ENCODE measurements at regions of chr2 and their contacts with region 1.

Region 1: DNA sequence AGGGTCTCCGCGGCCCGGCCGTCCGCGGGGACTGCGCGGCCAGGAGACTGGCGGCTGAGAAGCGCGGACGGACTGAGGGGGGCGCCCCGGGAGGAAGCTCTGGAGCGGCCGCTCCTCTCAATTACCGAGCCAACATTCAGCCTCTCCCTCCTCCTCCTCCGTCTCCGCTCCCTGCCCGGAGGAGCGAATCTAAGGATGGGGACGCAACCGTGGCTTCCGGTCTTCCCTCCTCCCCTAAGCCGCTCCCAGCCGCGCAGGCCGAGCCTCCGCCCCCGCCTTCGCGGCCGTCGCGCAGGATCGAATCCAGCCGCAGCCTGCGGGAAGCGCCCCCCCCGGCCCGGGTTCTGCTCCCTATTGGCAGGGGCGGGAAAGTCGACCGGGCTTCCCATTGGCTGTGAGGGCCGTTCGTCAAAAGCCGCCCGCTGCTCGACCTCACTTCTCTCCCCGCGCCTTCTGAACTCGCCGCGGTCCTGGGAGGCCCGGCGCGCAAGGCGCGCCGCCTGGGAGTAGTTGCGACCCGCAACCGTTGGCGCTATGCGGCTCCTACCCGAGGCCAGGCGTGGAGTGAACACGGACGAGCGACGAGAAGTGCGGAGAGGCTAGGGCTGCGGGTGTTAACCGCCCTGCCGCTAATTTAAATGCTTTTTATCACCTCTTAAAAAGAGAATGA is at the start of gene HNRNPLL:
- DNase-seq: peak; percentile 97
- ATAC-seq: peak; percentile 82
- H3K4me3 Mint-ChIP-seq: peak within 1 kb of the TSS; percentile 99
- H3K27ac Mint-ChIP-seq: peak within 1 kb of the TSS; percentile 95
- H3K4me1 Mint-ChIP-seq: peaks cover 49% of the 10 kb centered on the region
- H3K27me3 Mint-ChIP-seq: no peaks in the 10 kb centered on the region
- total RNA-seq, gene HNRNPLL: 88.8 to 106 TPM

Region 2: DNA sequence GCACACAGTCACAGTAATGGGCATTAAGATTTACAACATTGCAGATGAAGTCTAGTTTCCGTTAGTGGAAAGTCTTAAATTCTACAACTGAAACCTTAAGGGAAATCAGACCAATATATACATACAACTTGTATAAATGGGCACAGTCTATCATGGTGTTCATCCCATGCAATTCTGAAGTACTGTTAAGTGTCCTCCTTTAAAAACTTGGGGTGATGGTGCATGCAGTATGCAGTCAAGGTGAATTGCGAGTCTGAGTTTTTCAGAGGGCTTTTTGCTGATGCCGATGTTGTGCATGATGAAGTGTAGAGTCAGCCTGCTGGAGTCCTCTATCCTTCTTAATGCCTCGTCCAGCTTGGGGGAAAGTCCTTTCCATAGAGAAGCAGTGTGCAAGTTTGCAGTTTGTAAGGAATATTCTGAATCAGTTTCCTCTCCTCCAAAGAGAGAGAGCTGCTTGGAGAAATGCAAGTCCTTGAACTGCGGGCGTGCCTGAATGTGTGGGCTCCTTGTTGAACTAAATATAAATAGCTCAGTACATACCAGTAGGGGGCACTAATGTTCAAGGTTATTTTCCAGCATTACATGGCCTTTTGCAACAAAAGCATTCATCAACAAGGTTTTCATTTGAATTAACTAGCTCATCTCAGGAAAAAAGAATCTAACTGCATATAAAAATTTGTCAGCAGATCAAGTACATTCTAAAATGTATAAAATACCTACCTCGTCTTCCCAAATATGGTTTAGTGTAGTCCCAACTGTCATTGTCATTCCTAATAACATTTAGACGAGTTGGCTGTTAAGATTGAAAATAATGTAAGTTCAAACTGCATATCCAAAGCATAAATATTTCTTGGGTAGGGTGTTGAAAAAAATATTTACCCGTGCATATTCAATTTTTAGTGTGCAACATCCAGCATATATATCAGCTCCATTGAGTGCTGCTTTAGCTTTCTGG is 21.4 kb before region 1 on chr2:
- CTCF ChIA-PET with region 1: interaction called, 72 read pairs
- DNase-seq: no peak
- ATAC-seq: peak; percentile 86
- H3K4me3 Mint-ChIP-seq: no peak overlapping the region
- H3K27ac Mint-ChIP-seq: peak overlapping the region; percentile 9
- H3K4me1 Mint-ChIP-seq: peaks cover 31% of the 10 kb centered on the region
- H3K27me3 Mint-ChIP-seq: no peaks in the 10 kb centered on the region

Region 3: DNA sequence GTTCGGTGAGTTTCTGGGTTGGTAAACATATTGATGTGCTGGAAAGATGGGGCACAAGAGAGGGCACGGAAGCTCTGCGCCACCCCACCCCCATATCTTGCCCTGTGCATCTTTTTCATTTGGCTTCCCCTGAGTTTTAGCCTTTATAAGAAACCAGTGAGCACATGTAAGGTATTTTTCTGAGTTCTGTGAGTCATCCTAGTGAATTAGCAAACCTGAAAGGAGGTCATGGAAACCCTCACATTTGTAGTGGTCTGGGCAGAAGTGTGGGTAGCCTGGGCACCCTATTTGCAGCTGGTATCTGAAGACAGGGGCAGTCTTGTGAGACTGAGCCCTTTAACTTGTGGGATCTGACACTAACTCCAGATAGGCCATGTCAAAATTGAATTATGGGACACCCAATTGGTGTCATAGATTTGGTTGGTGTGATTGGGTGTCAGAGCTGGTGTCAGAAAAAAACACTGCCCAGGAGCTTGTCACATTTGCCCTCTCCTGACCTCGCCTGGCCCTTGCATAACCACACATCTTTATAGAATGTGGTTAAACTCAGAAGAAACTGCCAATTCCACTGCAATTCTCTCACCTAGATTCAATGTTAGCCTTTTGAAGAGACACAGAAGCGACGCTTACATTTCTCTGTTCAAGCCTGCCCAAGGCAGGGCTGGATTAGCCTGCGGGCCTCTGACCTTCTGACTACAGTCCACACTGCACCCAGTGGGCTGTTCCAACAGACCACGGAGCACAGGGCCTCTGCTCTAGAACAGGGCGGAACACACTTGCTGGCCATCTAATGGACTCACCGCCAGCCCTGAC is 51.1 kb after region 1 on chr2:
- CTCF ChIA-PET with region 1: interaction called, 166 read pairs
- DNase-seq: peak; percentile 77
- ATAC-seq: peak; percentile 71
- H3K4me3 Mint-ChIP-seq: peak overlapping the region; percentile 55
- H3K27ac Mint-ChIP-seq: peak overlapping the region; percentile 94
- H3K4me1 Mint-ChIP-seq: peaks cover 69% of the 10 kb centered on the region
- H3K27me3 Mint-ChIP-seq: no peaks in the 10 kb centered on the region

Region 4: DNA sequence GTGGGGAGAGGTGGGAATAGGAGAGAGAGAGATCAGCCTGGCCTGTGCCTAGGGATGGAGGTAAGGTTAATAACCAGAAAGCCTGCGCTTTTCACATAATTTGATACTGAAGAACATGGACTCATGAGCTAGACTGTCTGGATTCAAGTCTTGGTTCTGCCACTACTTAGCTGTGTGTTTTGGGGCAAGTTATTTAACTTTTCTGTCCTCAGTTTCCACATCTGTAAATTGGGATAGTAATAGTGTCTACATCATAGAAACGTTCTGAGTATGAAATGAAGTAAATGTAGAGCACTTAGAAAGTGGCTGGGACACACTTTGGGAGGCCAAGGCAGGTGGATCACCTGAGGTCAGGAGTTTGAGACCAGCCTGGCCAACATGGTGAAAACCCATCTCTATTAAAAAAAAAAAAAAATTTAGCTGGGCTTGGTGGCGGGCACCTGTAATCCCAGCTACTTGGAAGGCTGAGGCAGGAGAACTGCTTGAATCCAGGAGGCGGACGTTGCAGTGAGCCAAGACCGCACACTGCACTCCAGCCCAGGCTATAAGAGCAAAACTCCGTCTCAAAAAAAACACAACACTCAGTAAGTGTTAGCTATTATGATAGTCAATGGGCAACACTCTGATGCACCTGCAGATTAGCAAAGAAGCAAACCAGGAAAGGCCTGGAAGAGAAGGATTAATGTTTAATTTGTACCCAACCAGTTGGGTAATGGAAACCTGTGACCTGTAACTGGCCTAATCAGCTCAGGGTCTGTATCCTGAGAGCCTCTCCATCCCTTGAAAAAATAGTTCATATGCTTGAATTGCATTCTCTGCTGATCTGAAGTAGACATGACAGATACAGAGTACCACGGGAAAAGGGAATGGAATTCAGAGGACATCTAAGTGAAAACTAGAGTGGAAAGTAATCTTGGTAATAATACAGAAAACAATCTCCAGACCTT is 69.9 kb after region 1 on chr2:
- CTCF ChIA-PET with region 1: interaction called, 166 read pairs
- DNase-seq: no peak
- ATAC-seq: no peak
- H3K4me3 Mint-ChIP-seq: no peak overlapping the region
- H3K27ac Mint-ChIP-seq: peak overlapping the region; percentile 45
- H3K4me1 Mint-ChIP-seq: peaks cover 74% of the 10 kb centered on the region
- H3K27me3 Mint-ChIP-seq: no peaks in the 10 kb centered on the region

Region 5: GRCh38 chr2:38720613-38721241 is 117.9 kb after region 1 on chr2:
- CTCF ChIA-PET with region 1: interaction called, 52 read pairs
- DNase-seq: no peak
- ATAC-seq: peak; percentile 10
- H3K4me3 Mint-ChIP-seq: no peak overlapping the region
- H3K27ac Mint-ChIP-seq: peak overlapping the region; percentile 63
- H3K4me1 Mint-ChIP-seq: peaks cover 51% of the 10 kb centered on the region
- H3K27me3 Mint-ChIP-seq: no peaks in the 10 kb centered on the region